ENCODE measurements at regions of chr12 and their contacts with region 1.

Region 1: DNA sequence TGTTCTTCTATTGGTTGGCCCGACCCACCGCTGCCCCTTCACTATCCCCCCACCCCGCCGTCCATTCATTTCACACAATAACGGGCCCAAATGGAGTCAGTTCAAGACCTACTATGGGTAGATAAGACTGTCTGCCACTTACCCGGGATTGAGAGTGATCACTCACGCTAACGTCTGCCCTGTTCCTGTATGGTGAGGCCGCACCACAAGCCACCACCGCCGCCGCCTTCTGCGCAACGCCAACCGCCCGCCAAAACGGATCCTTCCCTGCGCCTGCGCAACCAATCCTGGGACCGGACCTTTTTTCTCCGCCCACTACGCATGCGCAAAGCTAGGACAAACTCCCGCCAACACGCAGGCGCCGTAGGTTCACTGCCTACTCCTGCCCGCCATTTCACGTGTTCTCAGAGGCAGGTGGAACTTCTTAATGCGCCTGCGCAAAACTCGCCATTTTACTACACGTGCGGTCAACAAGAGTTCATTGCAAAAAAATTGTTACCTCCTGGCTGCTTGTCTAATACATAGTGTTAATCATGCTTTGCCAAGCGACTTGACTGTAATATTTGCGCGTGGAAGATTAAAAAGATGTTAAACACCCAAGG is at the start of gene CBX5:
- DNase-seq: peak; percentile 97

Region 2: GRCh38 chr12:54239620-54240019 is 40.3 kb before region 1 on chr12:
- CTCF ChIA-PET with region 1: no interaction called
- POLR2A ChIA-PET with region 1: interaction called, 14 read pairs
- DNase-seq: no peak

Region 3: GRCh38 chr12:54259194-54260011 is 20.6 kb before region 1 on chr12:
- CTCF ChIA-PET with region 1: no interaction called
- POLR2A ChIA-PET with region 1: interaction called, 175 read pairs
- DNase-seq: peak; percentile 87

Region 4: GRCh38 chr12:54300732-54301427 is 20.9 kb after region 1 on chr12 and contains the start of gene NFE2:
- CTCF ChIA-PET with region 1: no interaction called
- POLR2A ChIA-PET with region 1: interaction called, 38 read pairs
- DNase-seq: peak; percentile 62

Region 5: GRCh38 chr12:54324617-54325441 is 44.9 kb after region 1 on chr12 and contains the start of gene COPZ1:
- CTCF ChIA-PET with region 1: no interaction called
- POLR2A ChIA-PET with region 1: interaction called, 42 read pairs
- DNase-seq: peak; percentile 91

Region 6: DNA sequence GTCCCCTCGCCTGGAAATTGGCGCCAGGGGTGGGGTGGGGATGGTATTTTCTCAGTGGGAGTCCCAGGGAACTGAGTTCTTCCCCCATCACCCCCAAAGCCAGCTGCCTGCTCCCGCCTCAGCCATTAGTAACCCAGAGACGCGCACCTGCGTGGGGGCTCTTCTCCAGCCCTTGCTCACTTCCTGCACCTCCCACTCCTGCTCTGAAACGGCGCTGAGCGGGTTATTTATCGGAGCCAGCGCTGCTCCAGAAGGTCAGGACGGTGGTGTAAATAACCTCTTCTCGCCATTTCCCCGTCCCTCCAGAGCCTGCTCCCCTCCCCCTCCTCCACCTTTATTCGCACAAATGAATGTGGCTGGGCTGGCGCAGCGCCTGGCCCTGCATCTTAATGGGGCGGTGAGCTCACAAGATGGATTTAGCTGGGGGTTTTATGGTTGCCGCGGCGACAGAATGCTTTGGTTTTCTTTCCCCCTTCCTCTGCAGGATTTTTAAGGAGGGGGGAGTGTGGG is 72.1 kb after region 1 on chr12:
- CTCF ChIA-PET with region 1: no interaction called
- POLR2A ChIA-PET with region 1: interaction called, 53 read pairs
- DNase-seq: no peak

Region 7: GRCh38 chr12:54379401-54380201 is 99.6 kb after region 1 on chr12:
- CTCF ChIA-PET with region 1: interaction called, 4 read pairs
- POLR2A ChIA-PET with region 1: interaction called, 14 read pairs
- DNase-seq: peak; percentile 94